H1 (cell line): ENCODE measurements at regions of chr17 and their contacts with region 1.

Region 1: DNA sequence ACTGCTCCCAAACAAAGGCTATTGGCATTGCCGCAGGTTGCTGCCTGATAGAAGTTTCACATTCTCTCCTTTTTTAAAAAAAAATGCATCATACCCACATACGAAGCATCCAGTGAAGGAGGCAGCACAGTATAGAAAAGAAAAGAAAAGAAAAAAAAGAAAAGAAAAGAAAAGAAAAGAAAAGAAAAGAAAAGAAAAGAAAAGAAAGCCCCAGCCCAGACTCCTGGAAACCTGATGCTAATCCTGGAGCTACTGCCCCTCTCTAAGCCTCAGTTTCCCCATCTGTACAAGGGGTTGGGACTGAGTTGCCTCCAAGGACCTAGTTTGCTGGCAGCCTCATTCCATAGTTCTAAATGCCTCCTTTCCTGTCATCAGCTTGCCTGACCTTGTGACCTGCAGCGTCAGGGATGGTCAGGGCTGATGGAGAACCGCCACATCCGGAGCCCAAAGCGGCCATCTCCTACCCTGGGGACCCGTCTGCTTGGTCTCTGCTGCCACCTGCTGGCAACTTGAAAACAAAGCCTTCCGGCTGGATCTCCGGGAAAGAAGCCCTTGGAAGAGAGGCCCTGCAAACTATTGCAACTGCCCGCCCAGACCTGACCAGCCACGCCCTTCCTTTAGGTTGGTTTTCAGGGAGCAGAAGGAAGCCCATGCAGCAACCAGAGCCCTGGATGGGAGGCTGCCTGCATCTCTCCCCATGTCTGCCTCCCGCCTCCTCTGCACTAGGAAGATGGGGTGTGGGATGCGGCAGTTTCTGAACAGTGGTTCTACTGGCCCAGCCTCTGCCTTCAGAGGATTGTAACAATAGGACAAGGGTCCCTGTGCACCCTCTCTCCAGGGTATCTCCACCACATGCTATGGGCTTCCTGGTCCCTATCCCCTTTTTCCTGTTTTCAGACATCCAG is 13.0 kb downstream of the AIPL1 start:
- DNase-seq: peak; percentile 60 to 94
- H3K4me3 ChIP-seq: no peak overlapping the region
- H3K27ac ChIP-seq: no peak overlapping the region
- H3K4me1 ChIP-seq: peaks cover 0 to 7% (median 5%) of the 10 kb centered on the region in 4 experiments; a peak in 4 of 7 replicates
- H3K27me3 ChIP-seq: no peaks in the 10 kb centered on the region
- CTCF ChIP-seq: peak; percentile 70 to 93 (median 89)
- EP300 ChIP-seq: no peak
- POLR2A ChIP-seq: no peak
- RAD21 ChIP-seq: peak; percentile 99 to 100

Region 2: DNA sequence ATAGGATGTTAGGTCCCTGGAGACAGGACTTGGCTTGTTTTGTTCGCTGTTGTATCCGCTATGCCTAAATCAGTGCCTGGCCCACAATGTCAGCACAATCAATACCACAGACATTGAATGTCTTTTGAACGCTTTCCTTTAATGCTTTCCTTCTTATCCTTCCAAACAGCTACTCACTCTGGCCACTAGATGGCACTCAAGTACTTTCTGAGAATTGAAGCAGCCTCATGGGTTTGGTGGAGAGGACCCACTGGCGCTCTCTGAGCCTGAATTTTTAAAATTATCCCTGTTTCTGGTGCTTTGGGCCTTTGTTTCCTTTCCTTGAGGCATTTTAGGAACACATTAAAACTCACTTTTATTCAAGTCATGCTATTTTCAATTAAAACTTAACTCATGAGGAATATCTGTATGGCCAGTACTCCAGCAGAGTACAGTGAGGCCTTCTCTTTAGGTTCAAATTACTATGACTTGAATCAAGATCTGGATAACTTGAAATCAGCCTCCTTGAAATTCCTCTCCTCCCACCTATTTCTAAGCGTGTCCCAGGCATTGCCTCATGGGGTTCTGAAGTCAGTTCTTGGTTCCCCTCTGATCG is 834.4 kb before region 1 on chr17:
- CTCF ChIA-PET with region 1: interaction called, 26 read pairs
- POLR2A ChIA-PET with region 1: no interaction called
- DNase-seq: no peak
- H3K4me3 ChIP-seq: no peak overlapping the region
- H3K27ac ChIP-seq: no peak overlapping the region
- H3K4me1 ChIP-seq: peaks cover 0 to 3% (median 0%) of the 10 kb centered on the region in 4 experiments; a peak in 1 of 7 replicates
- H3K27me3 ChIP-seq: no peaks in the 10 kb centered on the region
- CTCF ChIP-seq: peak; percentile 14 to 87 (median 85)
- EP300 ChIP-seq: no peak
- POLR2A ChIP-seq: no peak
- RAD21 ChIP-seq: peak; percentile 97 to 98

Region 3: GRCh38 chr17:6435968-6436367 is 14.0 kb after region 1 on chr17:
- CTCF ChIA-PET with region 1: interaction called, 60 read pairs
- POLR2A ChIA-PET with region 1: no interaction called
- DNase-seq: peak in 1 of 2 experiments; percentile 81
- H3K4me3 ChIP-seq: no peak overlapping the region
- H3K27ac ChIP-seq: no peak overlapping the region
- H3K4me1 ChIP-seq: peaks cover 2 to 21% (median 6%) of the 10 kb centered on the region in 4 experiments
- H3K27me3 ChIP-seq: no peaks in the 10 kb centered on the region
- CTCF ChIP-seq: peak; percentile 79 to 90 (median 89)
- EP300 ChIP-seq: no peak
- POLR2A ChIP-seq: no peak
- RAD21 ChIP-seq: peak; percentile 92 to 93

Region 4: GRCh38 chr17:6443692-6444569 is 22.0 kb after region 1 on chr17 and contains the start of gene PIMREG:
- CTCF ChIA-PET with region 1: interaction called, 12 read pairs
- POLR2A ChIA-PET with region 1: interaction called, 4 read pairs
- DNase-seq: peak; percentile 86 to 97
- H3K4me3 ChIP-seq: peak within 1 kb of the TSS; percentile 83 to 89 (median 87)
- H3K27ac ChIP-seq: peak within 1 kb of the TSS; percentile 95
- H3K4me1 ChIP-seq: peaks cover 6 to 20% (median 10%) of the 10 kb centered on the region in 4 experiments
- H3K27me3 ChIP-seq: no peaks in the 10 kb centered on the region
- CTCF ChIP-seq: peak in 1 of 3 experiments; percentile 2; a peak in 1 of 4 replicates
- EP300 ChIP-seq: no peak
- POLR2A ChIP-seq: peak; percentile 78 to 95
- RAD21 ChIP-seq: no peak
- total RNA-seq, gene PIMREG: 133 and 143 TPM in 2 replicates